Aorta (tissue), 5 donors: ENCODE measurements at regions of chr3 and their contacts with region 1.

Region 1: DNA sequence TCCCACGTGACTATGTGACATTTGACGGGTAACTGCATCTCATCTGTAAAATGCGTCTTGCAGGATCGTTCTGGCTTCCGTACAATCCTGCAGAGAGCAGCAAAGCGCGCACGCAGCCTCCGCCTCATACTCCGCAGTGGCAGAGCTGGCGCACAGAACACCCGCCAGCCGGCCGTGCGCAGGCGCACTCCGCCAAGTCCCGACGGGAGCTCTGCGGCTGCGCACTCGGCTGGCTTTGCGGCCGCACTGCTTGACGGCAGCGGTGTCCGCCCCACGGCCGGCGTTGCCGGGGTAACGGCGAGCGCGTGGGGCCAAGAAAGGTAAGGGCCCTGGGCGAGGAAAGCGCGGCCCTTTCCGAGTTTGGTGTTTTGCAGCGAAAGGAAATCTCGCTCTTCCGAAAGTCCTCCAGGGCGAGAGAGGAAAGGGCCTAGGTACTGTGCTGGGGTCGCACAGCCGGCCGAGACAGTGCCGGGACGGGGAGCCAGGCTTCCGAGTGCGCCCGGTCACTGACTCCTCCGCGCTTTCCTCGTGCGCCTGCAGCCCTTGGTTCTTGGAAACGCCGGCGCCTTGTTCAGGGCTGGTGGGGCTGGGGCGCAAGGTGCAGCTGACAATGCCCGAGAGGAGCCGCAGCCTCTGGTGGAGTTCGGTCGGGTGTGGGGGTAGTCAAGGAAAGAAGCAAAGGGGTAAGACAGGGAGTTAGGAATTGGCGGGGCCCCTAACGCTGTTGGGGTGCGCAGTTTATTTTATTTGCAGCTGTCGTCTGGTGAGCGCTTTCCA is at the start of gene TSEN2:
- DNase-seq: peak; percentile 96 to 98
- ATAC-seq: peak; percentile 97
- H3K4me3 ChIP-seq: peak within 1 kb of the TSS; percentile 55 to 68
- H3K27ac ChIP-seq: peak within 1 kb of the TSS in 1 of 2 donors; percentile 52
- H3K4me1 ChIP-seq: no peaks in the 10 kb centered on the region
- H3K27me3 ChIP-seq: no peaks in the 10 kb centered on the region
- total RNA-seq, gene TSEN2: 13.2 to 14.7 TPM

Region 2: DNA sequence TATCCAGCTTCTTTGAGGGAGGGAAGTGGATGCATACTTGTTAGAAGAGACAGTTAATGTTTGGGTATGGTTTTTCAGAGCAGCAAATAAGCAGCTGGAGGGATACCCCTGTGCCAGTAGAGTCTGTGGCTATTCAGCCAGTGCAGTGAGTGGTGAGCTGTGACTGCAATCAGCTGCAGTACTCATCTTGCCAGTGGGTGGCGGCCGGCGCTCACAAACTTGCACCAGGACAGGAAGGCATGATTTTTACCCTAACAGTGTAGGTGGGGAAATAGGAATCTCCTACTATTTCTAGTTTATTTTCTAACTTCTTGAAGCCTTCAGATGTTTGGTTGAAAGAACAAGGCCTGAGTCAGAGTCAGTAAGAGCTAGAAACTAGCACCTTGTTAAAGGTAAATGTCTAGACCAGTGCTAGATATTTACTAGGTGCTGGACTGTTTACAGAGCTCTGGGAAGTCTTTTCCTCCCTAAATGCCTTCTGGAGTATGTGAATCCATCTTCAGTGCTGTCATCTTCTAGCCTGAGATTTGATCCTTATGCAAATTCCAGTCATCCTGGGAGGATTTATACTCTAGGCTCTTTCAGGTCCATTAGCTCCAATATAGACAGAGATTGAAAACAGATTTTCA is 349.2 kb before region 1 on chr3:
- intact Hi-C with region 1: loop called (anchors 1 to 2 kb)
- DNase-seq: peak; percentile 79 to 92
- ATAC-seq: peak; percentile 83
- H3K4me3 ChIP-seq: no peak overlapping the region
- H3K27ac ChIP-seq: no peak overlapping the region
- H3K4me1 ChIP-seq: no peaks in the 10 kb centered on the region
- H3K27me3 ChIP-seq: peaks cover 0 to 3% of the 10 kb centered on the region in 2 donors

Region 3: GRCh38 chr3:12143949-12144504 is 340.4 kb before region 1 on chr3:
- intact Hi-C with region 1: loop called in 1 of 2 experiments (anchors 1 kb)
- DNase-seq: peak; percentile 69 to 84
- ATAC-seq: peak; percentile 92
- H3K4me3 ChIP-seq: no peak overlapping the region
- H3K27ac ChIP-seq: peak overlapping the region; percentile 51 to 100
- H3K4me1 ChIP-seq: peaks cover 0 to 2% of the 10 kb centered on the region in 2 donors
- H3K27me3 ChIP-seq: no peaks in the 10 kb centered on the region

Region 4: DNA sequence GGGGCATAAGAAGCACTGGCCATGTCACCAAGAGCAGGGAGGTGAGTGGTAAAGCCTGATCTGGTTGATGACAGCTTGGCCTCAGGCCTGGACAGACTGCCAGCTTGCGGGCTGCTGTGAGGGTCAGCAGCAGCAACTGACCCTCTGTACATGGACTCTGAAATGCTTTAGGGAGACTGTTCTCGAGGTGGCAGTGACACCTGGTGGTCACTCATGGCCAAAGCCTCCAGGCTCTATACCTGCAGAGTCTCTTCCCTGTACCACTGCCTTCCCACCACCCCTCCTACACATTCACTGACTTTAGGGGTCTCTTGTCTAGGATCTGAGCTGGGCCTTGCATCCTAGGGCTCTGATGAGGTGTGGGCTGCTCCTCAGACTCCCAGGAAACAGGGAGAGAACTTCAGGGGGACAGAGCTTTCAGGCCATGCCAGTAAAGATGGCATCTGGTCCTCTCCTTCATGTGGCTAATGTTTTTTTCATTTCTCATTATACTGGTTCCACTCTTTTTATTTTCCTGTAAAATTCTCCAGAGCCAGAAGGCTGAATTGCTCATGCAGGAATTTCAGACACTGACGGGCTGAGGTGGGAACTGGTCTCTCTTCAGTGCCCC is 308.4 kb before region 1 on chr3:
- intact Hi-C with region 1: loop called (anchors 5 kb)
- DNase-seq: peak; percentile 70 to 90
- ATAC-seq: peak; percentile 86
- H3K4me3 ChIP-seq: no peak overlapping the region
- H3K27ac ChIP-seq: no peak overlapping the region
- H3K4me1 ChIP-seq: peaks cover 0 to 2% of the 10 kb centered on the region in 2 donors
- H3K27me3 ChIP-seq: no peaks in the 10 kb centered on the region

Region 5: DNA sequence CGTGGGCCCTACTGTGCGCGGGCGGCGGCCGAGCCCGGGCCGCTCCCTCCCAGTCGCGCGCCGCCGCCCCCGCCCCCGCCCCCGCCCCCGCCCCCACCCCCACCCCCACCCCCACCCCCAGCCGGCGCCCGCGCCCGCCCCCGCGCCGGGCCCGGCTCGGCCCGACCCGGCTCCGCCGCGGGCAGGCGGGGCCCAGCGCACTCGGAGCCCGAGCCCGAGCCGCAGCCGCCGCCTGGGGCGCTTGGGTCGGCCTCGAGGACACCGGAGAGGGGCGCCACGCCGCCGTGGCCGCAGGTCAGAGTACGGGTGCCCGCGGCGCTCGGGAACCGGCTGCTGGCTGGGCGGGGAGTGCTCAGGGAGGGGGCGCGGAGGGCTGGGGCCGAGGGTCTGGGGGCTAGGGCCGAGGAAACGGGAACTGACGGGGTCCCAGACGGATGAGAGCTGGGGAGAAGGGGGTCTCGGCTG is 196.6 kb before region 1 on chr3:
- intact Hi-C with region 1: loop called in 1 of 2 experiments (anchors 10 kb)
- DNase-seq: peak; percentile 60 to 81
- ATAC-seq: peak; percentile 77
- H3K4me3 ChIP-seq: peak overlapping the region; percentile 27 to 62
- H3K27ac ChIP-seq: no peak overlapping the region
- H3K4me1 ChIP-seq: no peaks in the 10 kb centered on the region
- H3K27me3 ChIP-seq: no peaks in the 10 kb centered on the region